Endothelial cell of umbilical vein (primary cell): ENCODE measurements at regions of chr1 and their contacts with region 1.

Region 1: DNA sequence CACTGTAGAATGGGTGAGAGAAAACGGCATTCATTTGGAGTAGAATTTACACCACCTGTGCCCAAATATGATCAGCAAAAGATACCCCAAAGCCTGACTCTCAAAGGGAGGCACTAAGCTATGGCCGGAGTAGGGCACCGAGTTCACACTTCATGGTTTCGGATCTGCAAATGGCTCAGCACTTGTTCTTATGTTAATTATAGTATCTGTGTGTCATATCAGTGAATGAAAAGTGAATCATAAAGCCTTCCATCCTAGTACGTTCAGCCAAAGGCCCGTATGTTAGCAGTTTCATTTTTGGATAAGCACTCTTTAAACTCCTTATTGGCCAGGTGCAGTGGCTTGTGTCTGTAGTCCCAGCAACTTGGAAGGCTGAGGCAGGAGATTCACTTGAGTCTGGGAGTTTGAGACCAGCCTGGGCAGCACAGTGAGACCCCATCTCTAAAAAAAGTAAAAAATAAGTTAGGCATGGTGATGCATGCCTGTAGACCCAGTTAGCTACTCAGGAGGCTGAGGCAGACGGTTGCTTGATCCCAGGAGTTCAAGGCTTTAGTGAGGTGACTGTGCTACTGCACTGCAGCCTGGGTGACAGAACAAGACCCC is 4.9 kb upstream of the CORT start:
- DNase-seq: no peak
- H3K4me3 ChIP-seq: no peak overlapping the region
- H3K27ac ChIP-seq: no peak overlapping the region
- H3K4me1 ChIP-seq: no peaks in the 10 kb centered on the region
- H3K27me3 ChIP-seq: no peaks in the 10 kb centered on the region
- CTCF ChIP-seq: no peak
- POLR2A ChIP-seq: no peak

Region 2: GRCh38 chr1:11448375-11449099 is 1003.6 kb after region 1 on chr1:
- CTCF ChIA-PET with region 1: no interaction called
- POLR2A ChIA-PET with region 1: no interaction called
- dilution Hi-C with region 1: no loop called
- intact Hi-C with region 1: loop called (anchors 5 kb)
- DNase-seq: no peak
- H3K4me3 ChIP-seq: no peak overlapping the region
- H3K27ac ChIP-seq: no peak overlapping the region
- H3K4me1 ChIP-seq: no peaks in the 10 kb centered on the region
- H3K27me3 ChIP-seq: no peaks in the 10 kb centered on the region
- CTCF ChIP-seq: no peak
- POLR2A ChIP-seq: no peak